Posterior cingulate gyrus (tissue), 11 donors: ENCODE measurements at regions of chr15 and their contacts with region 1.

Region 1: GRCh38 chr15:37134699-37135131 is 34.4 kb upstream of the MEIS2 start:
- DNase-seq: no peak

Region 2: GRCh38 chr15:35519541-35520149 is 1615.1 kb before region 1 on chr15:
- intact Hi-C with region 1: loop called (anchors 10 kb)
- DNase-seq: no peak

Region 3: DNA sequence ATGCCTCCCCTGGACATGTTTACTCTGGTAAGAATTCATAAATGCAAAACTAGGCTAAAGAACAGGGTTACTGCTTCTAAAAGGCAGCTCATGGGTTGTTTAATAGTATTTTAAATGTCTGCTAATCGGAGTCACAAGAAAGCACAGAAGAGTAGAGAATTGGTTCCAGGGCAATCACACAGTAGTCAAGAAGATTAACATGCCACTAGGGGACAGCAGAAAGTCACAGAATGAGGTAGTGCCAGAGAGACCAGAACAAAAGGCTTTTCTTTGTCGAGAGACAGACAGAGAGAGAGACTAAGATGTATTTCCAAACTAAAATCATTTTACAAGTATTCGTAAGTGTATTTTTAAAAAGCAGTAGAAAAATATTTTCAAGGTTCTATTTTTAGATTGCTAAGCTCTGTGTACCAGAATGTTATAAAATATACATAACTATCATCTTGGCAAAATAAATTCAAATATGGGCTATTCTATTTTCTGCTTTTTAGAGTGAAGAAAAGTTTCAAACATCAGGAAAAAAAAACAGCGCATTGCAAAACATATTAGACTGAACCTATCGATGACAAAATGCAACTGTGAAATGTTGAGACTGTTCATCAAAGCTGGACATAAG is 633.5 kb before region 1 on chr15:
- intact Hi-C with region 1: loop called (anchors 1 kb)
- DNase-seq: peak in 2 of 10 donors; percentile 15 to 30